Vagina (tissue), 2 donors: ENCODE measurements at regions of chr12 and their contacts with region 1.

Region 1: GRCh38 chr12:751192-751998 is 984 bp upstream of the WNK1 start:
- DNase-seq: peak in 1 of 2 donors; percentile 96
- H3K4me3 ChIP-seq: peak overlapping the region; percentile 78 to 96
- H3K27ac ChIP-seq: peak overlapping the region; percentile 100
- H3K4me1 ChIP-seq: peaks cover 27% of the 10 kb centered on the region
- H3K27me3 ChIP-seq: no peaks in the 10 kb centered on the region
- CTCF ChIP-seq: peak; percentile 37 to 70 (median 51)
- POLR2A ChIP-seq: peak in 1 of 2 donors; percentile 28

Region 2: GRCh38 chr12:642633-643474 is 108.5 kb before region 1 on chr12:
- intact Hi-C with region 1: loop called (anchors 10 kb)
- DNase-seq: no peak
- H3K4me3 ChIP-seq: peak overlapping the region; percentile 68 to 72
- H3K27ac ChIP-seq: peak overlapping the region; percentile 98
- H3K4me1 ChIP-seq: peaks cover 81% of the 10 kb centered on the region
- H3K27me3 ChIP-seq: no peaks in the 10 kb centered on the region
- CTCF ChIP-seq: peak in 1 of 3 experiments; percentile 14
- POLR2A ChIP-seq: no peak

Region 3: GRCh38 chr12:810671-811415 is 59.4 kb after region 1 on chr12:
- intact Hi-C with region 1: loop called (anchors 5 kb)
- DNase-seq: no peak
- H3K4me3 ChIP-seq: no peak overlapping the region
- H3K27ac ChIP-seq: no peak overlapping the region
- H3K4me1 ChIP-seq: peaks cover 32% of the 10 kb centered on the region
- H3K27me3 ChIP-seq: no peaks in the 10 kb centered on the region
- CTCF ChIP-seq: no peak
- POLR2A ChIP-seq: no peak

Region 4: DNA sequence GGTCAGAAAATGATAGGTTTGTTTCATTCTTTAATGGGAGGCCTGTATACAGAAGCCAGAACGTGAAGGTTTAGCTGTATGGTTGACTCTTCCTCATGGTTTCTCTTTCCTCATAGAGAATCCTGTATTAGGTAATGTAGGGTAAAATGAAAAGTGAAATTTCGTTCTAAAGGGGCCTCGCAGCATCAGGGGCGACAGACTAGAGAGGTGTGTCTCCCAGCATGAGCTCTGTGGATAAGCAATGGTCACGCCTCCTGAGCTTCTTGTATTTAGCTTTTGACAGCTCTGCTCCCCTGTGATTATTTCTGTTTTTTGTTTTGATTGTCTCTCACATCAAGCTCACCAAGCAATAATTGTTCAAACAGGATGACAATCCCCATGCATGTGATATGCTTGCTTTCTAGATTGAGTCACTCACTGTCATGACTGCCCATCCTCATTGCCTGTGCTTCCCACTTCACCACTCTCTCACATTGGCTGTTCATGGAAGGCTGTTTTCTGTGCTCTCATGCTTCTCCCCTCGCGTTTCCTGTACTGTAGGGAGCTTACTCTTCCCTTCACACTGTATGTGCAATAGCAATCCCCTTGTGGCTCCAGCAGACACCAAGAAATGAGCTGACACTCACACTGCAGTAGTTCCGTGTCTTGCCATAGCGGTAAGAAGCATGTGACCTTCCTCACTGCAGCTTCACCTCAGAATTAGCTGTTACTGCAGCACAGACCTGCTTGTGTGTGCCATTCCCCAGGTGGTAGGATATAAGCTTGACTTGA is 154.1 kb after region 1 on chr12:
- intact Hi-C with region 1: no loop called
- DNase-seq: no peak
- H3K4me3 ChIP-seq: no peak overlapping the region
- H3K27ac ChIP-seq: no peak overlapping the region
- H3K4me1 ChIP-seq: no peaks in the 10 kb centered on the region
- H3K27me3 ChIP-seq: no peaks in the 10 kb centered on the region
- CTCF ChIP-seq: no peak
- POLR2A ChIP-seq: no peak